Activated CD4-positive, alpha-beta memory T cell treated with anti-CD3 and anti-CD28 coated beads for 36 hours (primary cell): ENCODE measurements at regions of chr9 and their contacts with region 1.

Region 1: GRCh38 chr9:69044240-69045219 is 9.0 kb downstream of the FXN start:
- DNase-seq: peak; percentile 20
- H3K4me3 Mint-ChIP-seq: no peak overlapping the region
- H3K27ac Mint-ChIP-seq: peak overlapping the region; percentile 28
- H3K4me1 Mint-ChIP-seq: peaks cover 13% of the 10 kb centered on the region
- H3K27me3 Mint-ChIP-seq: no peaks in the 10 kb centered on the region

Region 2: DNA sequence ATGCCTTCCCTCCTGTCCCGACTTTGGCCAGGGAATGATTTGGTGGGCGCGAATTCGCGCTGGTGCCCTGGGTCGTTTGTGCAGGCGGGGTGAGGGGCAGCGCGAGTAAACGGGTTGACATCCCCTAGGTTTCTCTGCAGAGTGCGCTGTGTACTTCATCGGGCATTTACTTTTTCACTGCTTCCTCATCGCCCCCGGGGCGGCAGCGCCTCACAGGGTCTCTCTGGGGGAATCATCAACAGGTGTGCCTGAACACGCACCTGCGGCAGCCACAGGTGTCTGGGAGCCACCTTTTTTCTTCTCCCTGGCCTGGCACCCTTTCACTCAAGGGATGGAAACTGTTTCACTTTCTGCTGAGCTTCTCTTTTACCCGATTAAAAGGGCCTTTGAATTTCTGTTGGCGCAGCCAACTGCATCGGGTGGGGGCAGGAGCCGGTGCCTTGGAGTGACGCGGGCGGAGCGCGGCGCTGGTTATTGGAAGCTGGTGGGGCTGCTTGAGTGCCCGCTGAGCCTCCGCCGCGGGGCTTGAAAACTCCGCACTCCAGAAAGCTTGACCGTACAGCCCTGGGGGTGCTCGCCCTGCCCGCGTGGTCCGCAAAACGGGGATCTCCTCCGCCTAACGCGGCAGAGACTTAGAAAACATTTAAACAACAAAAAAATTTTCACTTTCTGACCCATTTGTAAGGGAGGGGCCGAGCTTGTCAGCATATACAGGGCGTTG is 77.5 kb after region 1 on chr9:
- CTCF ChIA-PET with region 1: no interaction called
- POLR2A ChIA-PET with region 1: no interaction called
- intact Hi-C with region 1: loop called (anchors 5 kb)
- DNase-seq: peak; percentile 58
- H3K4me3 Mint-ChIP-seq: peak overlapping the region; percentile 88
- H3K27ac Mint-ChIP-seq: no peak overlapping the region
- H3K4me1 Mint-ChIP-seq: peaks cover 7% of the 10 kb centered on the region
- H3K27me3 Mint-ChIP-seq: peaks cover 2% of the 10 kb centered on the region

Region 3: GRCh38 chr9:69204849-69205248 is 160.3 kb after region 1 on chr9:
- CTCF ChIA-PET with region 1: no interaction called
- POLR2A ChIA-PET with region 1: no interaction called
- intact Hi-C with region 1: no loop called
- DNase-seq: no peak
- H3K4me3 Mint-ChIP-seq: no peak overlapping the region
- H3K27ac Mint-ChIP-seq: no peak overlapping the region
- H3K4me1 Mint-ChIP-seq: peaks cover 7% of the 10 kb centered on the region
- H3K27me3 Mint-ChIP-seq: no peaks in the 10 kb centered on the region